ENCODE measurements at regions of chr7 and their contacts with region 1.

Region 1: DNA sequence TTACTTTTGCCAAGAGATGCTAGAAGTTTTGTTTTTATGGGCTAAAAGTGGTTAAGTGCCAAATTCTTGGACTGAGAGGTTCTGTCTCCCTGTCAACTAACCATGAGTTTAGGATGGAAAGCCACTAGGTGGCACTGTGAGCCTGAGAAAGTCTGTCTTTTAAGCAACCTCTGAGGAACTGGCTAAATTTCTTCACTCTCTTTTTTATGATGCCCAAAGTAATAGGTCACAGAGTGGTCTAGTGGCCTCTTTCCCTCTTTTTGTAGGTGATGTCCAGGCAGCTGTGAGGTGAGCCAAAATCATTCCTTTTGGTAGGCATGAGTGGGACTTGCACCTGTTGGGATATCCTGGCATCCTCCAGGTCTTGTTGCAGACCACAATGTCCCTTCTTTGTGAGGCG is 56.8 kb downstream of the SND1 start:
- H3K4me3 ChIP-seq: no peak overlapping the region
- H3K27ac ChIP-seq: no peak overlapping the region
- H3K4me1 ChIP-seq: no peaks in the 10 kb centered on the region
- CTCF ChIP-seq: peak; percentile 71

Region 2: DNA sequence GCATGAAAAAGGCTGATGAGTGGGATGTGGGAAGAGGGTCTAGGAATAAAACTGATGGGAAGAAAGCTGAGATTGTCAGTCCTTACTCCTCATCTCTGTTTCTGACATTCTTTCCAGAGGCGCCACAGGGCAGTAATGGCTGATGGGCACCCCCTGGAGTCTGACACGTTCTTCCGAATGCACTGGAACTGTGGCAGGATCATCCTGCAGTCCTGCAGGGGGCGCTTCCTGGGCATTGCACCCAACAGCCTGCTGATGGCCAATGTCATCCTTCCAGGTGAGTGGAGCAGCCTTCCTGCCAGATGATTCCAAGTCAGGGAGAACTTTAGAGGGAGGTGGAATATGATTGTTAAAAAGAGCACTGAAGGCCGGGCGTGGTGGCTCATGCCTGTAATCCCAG is 110.5 kb before region 1 on chr7:
- CTCF ChIA-PET with region 1: no interaction called
- POLR2A ChIA-PET with region 1: no interaction called
- H3K4me3 ChIP-seq: no peak overlapping the region
- H3K27ac ChIP-seq: no peak overlapping the region
- H3K4me1 ChIP-seq: no peaks in the 10 kb centered on the region
- CTCF ChIP-seq: no peak

Region 3: GRCh38 chr7:127667017-127667670 is 41.6 kb before region 1 on chr7:
- CTCF ChIA-PET with region 1: no interaction called
- POLR2A ChIA-PET with region 1: no interaction called
- H3K4me3 ChIP-seq: no peak overlapping the region
- H3K27ac ChIP-seq: no peak overlapping the region
- H3K4me1 ChIP-seq: peaks cover 5% of the 10 kb centered on the region
- CTCF ChIP-seq: no peak

Region 4: GRCh38 chr7:127792528-127793342 is 83.9 kb after region 1 on chr7:
- CTCF ChIA-PET with region 1: interaction called, 15 read pairs
- POLR2A ChIA-PET with region 1: no interaction called
- H3K4me3 ChIP-seq: no peak overlapping the region
- H3K27ac ChIP-seq: no peak overlapping the region
- H3K4me1 ChIP-seq: no peaks in the 10 kb centered on the region
- CTCF ChIP-seq: no peak

Region 5: DNA sequence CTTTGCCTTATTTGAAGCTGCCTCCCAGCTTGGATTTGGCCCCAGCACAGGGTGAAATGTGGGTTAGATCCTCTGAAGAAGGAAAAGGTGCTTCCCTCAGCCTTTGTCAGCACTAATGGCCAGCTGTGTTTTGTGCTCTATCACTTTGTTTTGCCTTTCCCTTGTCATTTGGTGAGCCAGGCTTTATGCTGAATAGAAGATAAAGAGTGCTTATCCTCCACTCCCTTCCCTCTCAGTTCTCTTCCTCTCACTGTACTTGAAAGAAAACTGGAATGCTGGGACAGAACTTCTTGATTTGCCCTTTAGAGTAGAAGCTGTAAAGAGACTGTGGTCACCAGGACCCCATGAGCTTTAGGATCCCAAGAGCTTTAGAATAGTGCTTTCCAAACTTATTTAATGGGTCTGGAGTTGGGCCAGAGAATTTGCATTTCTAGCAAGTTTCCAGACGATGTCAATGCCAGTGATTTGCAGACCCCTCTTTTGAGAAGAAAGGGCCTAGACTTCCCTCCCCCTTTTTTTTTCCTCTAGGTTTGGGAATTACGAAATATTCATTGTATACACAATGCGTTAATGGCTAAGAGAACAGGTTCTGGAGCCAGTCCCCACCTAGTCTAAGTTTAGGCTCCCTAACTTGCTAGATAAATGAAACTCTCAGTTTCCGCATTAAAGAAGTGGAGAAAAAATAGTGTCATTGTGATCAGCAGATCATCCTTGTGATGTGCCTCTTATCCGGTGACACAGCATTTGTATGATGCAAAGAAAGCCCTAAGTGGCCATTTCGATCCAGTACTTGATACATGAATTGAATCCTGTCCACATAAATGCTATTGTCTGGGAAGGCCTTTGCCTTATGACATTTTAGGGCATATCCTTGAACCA is 241.2 kb after region 1 on chr7:
- CTCF ChIA-PET with region 1: interaction called, 10 read pairs
- POLR2A ChIA-PET with region 1: no interaction called
- H3K4me3 ChIP-seq: no peak overlapping the region
- H3K27ac ChIP-seq: no peak overlapping the region
- H3K4me1 ChIP-seq: peaks cover 7% of the 10 kb centered on the region; the same call in 1 of the 2 replicates
- CTCF ChIP-seq: no peak

Region 6: GRCh38 chr7:128031901-128032604 is 323.3 kb after region 1 on chr7:
- CTCF ChIA-PET with region 1: interaction called, 12 read pairs
- POLR2A ChIA-PET with region 1: no interaction called
- H3K4me3 ChIP-seq: peak overlapping the region; percentile 45
- H3K27ac ChIP-seq: no peak overlapping the region; the same call in 1 of the 2 replicates
- H3K4me1 ChIP-seq: no peaks in the 10 kb centered on the region; the same call in none of the 2 replicates
- CTCF ChIP-seq: peak; percentile 55; the same call in 1 of the 2 replicates

Region 7: GRCh38 chr7:128069373-128070364 is 360.9 kb after region 1 on chr7:
- CTCF ChIA-PET with region 1: interaction called, 12 read pairs
- POLR2A ChIA-PET with region 1: no interaction called
- H3K4me3 ChIP-seq: no peak overlapping the region
- H3K27ac ChIP-seq: no peak overlapping the region
- H3K4me1 ChIP-seq: no peaks in the 10 kb centered on the region
- CTCF ChIP-seq: no peak

Region 8: DNA sequence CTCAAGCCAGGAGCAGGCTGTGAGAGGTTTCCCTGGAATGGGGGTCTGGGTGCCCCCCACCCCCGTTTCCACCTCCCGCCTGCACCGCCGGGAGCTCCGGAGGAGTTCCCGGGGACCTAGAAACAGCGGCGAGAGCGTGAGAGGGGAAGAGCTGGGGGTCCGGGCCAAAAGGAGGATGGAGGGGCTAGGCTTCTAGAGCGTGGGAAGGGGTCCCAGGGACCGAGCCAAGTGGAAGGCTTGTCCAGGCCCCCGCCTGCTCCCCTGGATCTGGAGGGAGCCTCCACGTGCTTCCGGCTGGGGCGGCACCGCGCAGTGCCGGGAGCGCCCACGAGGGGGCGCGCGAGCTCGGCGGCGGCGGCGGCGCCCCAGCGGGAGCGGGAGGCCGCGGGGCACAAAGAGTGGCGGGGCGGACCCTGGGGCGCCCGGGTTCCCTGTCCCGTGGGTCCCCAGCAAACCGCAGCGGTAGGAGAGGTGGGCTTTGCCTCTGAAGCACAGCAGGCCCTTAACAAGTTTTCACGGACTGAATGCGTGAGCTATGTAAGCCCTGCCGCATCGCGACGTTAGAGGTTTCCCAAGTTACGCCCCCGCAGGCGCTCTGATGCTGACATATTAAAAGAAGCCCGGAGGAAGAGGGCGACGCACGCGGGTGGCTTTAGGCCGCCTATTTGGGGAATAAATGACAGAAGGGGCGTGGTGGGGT is 426.9 kb after region 1 on chr7:
- CTCF ChIA-PET with region 1: interaction called, 21 read pairs
- POLR2A ChIA-PET with region 1: no interaction called
- H3K4me3 ChIP-seq: peak overlapping the region; percentile 58
- H3K27ac ChIP-seq: no peak overlapping the region
- H3K4me1 ChIP-seq: no peaks in the 10 kb centered on the region
- CTCF ChIP-seq: no peak